Ascending aorta (tissue), 2 donors: ENCODE measurements at regions of chr18 and their contacts with region 1.

Region 1: DNA sequence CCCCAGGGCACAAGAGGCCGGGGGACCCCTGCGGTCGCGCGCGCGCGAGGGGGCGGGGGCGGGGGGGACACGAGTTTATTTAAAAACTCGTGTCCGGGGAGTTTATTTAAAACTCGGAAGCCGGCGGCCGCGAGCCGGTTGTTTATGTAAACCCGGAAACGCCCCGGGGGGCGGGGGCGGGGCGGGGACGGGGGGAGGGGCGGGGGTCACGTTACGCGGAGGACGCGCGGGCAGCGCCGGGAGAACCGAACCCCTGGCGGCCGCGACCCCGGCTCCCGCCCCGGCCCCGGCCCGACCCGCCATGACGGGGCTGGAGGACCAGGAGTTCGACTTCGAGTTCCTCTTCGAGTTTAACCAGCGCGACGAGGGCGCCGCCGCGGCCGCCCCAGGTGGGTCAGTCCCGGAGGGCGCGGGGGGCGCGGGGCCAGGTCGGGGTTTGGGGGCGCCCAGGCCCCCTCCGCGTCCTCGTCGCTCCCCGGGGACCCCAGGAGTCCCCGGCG is 4.4 kb downstream of the NFATC1 start:
- DNase-seq: peak in 1 of 2 donors; percentile 84
- H3K4me3 ChIP-seq: peak overlapping the region; percentile 91 to 96
- H3K27ac ChIP-seq: peak overlapping the region; percentile 89 to 90
- H3K4me1 ChIP-seq: peaks cover 4 to 18% of the 10 kb centered on the region in 2 donors
- H3K27me3 ChIP-seq: no peaks in the 10 kb centered on the region
- CTCF ChIP-seq: no peak

Region 2: DNA sequence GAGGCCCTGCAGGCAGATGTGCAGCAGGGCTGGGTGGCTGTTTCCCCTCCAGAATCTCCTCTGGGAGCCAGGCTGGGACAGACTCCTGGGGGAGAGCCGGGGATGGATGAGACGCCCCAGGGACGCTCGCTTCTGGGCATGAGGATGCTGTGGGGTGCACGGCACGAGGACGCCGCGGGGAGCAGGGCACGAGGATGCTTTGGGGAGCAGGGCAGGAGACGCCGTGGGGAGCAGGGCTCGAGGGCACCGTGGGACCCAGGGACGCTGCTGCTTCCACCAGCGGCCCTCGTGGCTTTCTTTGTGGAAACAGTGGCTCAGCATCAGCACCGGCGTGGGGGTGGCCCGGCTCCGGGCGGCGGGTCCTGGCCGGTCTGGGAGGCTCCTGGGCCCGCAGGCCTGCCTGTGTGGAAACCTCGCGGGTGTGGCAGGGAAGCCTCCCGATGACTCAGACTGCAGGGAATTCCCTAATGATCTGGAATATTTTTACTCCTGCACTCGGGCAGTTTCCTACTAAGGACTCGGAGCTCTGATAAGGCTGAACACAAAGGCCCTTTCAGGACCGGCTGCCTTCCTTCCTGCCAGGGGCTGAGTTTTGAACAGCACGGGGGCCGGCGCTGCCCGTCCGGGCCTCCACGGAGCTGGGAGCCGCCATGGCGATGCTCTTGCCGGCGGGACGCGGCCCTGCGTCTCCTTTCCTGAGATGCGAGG is 58.1 kb after region 1 on chr18:
- intact Hi-C with region 1: loop called (anchors 5 kb)
- DNase-seq: peak; percentile 16 to 87
- H3K4me3 ChIP-seq: peak overlapping the region in 1 of 2 donors; percentile 45
- H3K27ac ChIP-seq: peak overlapping the region; percentile 39 to 61
- H3K4me1 ChIP-seq: peaks cover 0 to 14% of the 10 kb centered on the region in 2 donors
- H3K27me3 ChIP-seq: no peaks in the 10 kb centered on the region
- CTCF ChIP-seq: no peak

Region 3: DNA sequence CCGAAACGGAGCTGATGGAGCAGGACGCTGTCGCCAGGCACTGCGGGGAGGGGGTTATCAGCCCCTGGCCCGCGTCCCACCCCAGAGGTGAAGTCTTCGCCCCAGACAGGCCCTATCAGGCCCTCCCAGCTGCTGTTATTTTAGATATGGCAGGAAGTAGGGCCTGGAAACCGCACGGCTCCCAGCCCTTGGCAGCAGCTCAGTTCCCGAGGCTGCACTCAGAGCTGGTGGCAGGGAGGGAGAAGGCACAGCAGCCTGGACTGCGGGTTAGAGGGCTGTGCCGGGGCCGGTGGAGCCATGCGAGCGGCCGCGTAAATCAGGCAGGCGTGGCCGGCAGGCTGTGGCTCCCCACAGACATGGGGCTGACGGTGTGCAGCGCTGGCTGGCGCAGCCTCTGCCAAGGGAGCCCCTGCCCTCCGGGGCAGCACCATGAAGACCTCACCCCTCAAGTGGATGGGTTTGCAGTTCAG is 107.0 kb after region 1 on chr18:
- intact Hi-C with region 1: loop called (anchors 5 kb)
- DNase-seq: peak in 1 of 2 donors; percentile 82
- H3K4me3 ChIP-seq: peak overlapping the region; percentile 57 to 59
- H3K27ac ChIP-seq: peak overlapping the region; percentile 90 to 93
- H3K4me1 ChIP-seq: peaks cover 7 to 31% of the 10 kb centered on the region in 2 donors
- H3K27me3 ChIP-seq: no peaks in the 10 kb centered on the region
- CTCF ChIP-seq: no peak